Panc1 (cell line): ENCODE measurements at regions of chr6 and their contacts with region 1.

Region 1: DNA sequence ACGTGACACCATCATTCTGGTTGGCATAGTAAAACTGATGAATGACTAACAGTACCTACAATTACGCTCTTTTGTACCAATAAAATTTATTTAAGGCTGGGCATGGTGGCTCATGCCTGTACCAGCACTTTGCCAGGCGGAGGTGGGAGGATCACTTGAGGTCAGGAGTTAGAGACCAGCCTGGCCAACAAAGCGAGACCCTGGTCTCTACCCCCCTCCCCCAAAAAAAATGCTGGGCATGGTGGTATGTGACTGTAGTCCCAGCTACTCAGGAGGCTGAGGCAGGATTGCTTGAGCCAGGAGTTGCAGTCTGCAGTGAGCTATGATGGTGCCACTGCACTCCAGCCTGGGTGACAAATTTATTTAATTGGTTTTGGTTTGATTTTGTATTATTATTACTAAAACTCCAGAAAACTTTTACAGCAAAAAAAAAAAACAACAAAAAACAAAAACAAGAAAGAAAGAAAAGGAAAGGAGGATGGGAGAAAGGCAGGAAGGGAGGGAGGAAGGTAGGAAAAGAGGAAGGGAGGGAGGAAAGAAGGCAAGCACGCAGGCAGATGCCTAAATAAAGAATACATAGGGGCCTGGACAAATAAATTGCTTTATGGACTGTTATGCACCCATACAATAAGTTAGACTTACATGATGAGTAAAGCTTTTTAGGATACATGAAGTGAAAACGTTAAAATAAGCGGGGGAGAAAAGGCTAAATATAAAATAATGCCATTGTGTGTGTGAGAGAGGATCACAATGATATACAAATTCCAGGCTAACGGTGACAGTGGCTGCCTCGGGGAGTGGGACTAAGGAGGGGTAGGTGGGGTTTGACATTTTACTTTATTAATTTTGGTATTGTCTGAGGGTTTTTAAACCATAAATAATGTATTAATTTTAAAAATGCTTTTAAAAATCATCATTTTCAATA is 682 bp upstream of the ZSCAN9 start:
- DNase-seq: no peak
- ATAC-seq: no peak
- H3K4me3 ChIP-seq: peak overlapping the region; percentile 77 to 96
- H3K27ac ChIP-seq: peak overlapping the region; percentile 98
- H3K4me1 ChIP-seq: peaks cover 22% of the 10 kb centered on the region
- H3K27me3 ChIP-seq: no peaks in the 10 kb centered on the region
- CTCF ChIP-seq: no peak

Region 2: DNA sequence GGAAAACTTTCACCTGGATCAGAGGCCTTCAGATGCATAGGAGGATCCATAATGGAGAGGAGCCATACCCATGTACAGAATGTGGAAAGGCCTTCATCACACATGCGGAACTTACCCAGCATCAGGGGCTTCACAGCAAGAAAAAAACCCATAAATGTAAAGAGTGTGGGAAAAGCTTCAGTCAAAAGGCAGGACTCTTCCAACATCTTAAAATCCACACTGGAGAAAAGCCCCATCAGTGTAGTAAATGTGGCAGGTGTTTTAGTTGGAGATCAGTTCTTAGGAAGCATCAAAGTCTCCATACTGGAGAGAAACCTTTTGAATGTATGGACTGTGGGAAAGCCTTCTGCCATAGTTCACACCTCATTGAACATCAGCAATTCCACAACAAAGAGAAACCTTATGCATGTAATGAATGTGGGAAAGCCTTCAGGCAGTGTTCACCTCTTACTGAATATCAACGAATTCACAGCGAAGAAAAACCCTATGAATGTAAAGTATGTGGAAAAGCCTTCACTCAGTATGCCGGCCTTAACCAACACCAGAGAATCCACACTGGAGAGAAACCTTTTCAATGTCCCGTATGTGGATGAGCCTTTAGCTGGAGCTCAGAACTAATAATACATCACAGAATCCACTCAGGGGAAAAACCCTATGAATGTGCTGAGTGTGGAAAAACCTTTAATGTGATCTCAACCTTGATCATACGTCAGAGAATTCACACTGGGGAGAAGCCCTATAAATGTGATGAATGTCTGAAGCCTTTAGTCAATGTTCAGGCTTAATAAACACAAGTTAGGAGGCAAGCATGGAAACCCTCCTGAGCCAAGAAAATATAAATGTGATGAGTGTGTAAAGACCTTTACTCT is 36.0 kb before region 1 on chr6:
- CTCF ChIA-PET with region 1: no interaction called
- POLR2A ChIA-PET with region 1: no interaction called
- in situ Hi-C with region 1: no loop called
- intact Hi-C with region 1: no loop called
- DNase-seq: no peak
- ATAC-seq: no peak
- H3K4me3 ChIP-seq: no peak overlapping the region
- H3K27ac ChIP-seq: no peak overlapping the region
- H3K4me1 ChIP-seq: no peaks in the 10 kb centered on the region
- H3K27me3 ChIP-seq: no peaks in the 10 kb centered on the region
- CTCF ChIP-seq: no peak

Region 3: GRCh38 chr6:28335564-28336283 is 111.3 kb after region 1 on chr6 and contains the start of gene ZSCAN31:
- CTCF ChIA-PET with region 1: no interaction called
- POLR2A ChIA-PET with region 1: no interaction called
- in situ Hi-C with region 1: no loop called
- intact Hi-C with region 1: loop called (anchors 5 kb)
- DNase-seq: no peak
- ATAC-seq: peak; percentile 97
- H3K4me3 ChIP-seq: peak within 1 kb of the TSS; percentile 85 to 86
- H3K27ac ChIP-seq: peak within 1 kb of the TSS; percentile 95
- H3K4me1 ChIP-seq: peaks cover 23% of the 10 kb centered on the region
- H3K27me3 ChIP-seq: no peaks in the 10 kb centered on the region
- CTCF ChIP-seq: no peak
- total RNA-seq, gene ZSCAN31: 10.4 TPM

Region 4: DNA sequence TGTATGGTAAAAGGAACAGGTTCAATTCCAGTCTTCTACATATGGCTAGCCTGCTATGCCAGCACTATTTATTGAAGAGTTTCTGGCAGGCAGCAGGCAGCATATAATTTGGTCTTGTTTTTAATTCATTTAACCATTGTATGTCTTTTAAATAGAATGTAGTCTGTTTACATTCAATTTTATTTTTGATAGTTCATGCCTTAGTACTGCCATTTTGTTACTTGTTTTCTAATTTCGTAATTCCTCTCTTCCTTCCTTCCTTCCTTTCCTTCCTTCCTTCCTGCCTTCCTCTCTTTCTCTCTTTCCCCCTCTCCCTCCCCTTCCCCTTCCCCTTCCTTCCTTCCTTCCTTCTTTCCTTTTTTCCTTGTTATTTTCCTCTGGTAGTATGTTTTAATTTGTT is 928.7 kb after region 1 on chr6:
- CTCF ChIA-PET with region 1: no interaction called
- POLR2A ChIA-PET with region 1: no interaction called
- in situ Hi-C with region 1: no loop called
- intact Hi-C with region 1: no loop called
- DNase-seq: no peak
- ATAC-seq: no peak
- H3K4me3 ChIP-seq: no peak overlapping the region
- H3K27ac ChIP-seq: no peak overlapping the region
- H3K4me1 ChIP-seq: no peaks in the 10 kb centered on the region
- H3K27me3 ChIP-seq: no peaks in the 10 kb centered on the region
- CTCF ChIP-seq: no peak